ENCODE measurements at regions of chr1 and their contacts with region 1.

Region 1: GRCh38 chr1:178282949-178283367 is 189.1 kb downstream of the RASAL2 start:
- DNase-seq: no peak
- ATAC-seq: no peak
- H3K4me3 Mint-ChIP-seq: no peak overlapping the region
- H3K27ac Mint-ChIP-seq: no peak overlapping the region
- H3K4me1 Mint-ChIP-seq: no peaks in the 10 kb centered on the region
- H3K27me3 Mint-ChIP-seq: no peaks in the 10 kb centered on the region

Region 2: GRCh38 chr1:177368255-177368654 is 914.7 kb before region 1 on chr1:
- CTCF ChIA-PET with region 1: no interaction called
- POLR2A ChIA-PET with region 1: no interaction called
- intact Hi-C with region 1: no loop called
- DNase-seq: no peak
- ATAC-seq: peak; percentile 26
- H3K4me3 Mint-ChIP-seq: no peak overlapping the region
- H3K27ac Mint-ChIP-seq: no peak overlapping the region
- H3K4me1 Mint-ChIP-seq: no peaks in the 10 kb centered on the region
- H3K27me3 Mint-ChIP-seq: no peaks in the 10 kb centered on the region

Region 3: GRCh38 chr1:178031856-178032320 is 251.1 kb before region 1 on chr1:
- CTCF ChIA-PET with region 1: no interaction called
- POLR2A ChIA-PET with region 1: no interaction called
- intact Hi-C with region 1: loop called in 1 of 2 experiments (anchors 5 kb)
- DNase-seq: peak; percentile 63
- ATAC-seq: no peak
- H3K4me3 Mint-ChIP-seq: no peak overlapping the region
- H3K27ac Mint-ChIP-seq: no peak overlapping the region
- H3K4me1 Mint-ChIP-seq: no peaks in the 10 kb centered on the region
- H3K27me3 Mint-ChIP-seq: peaks cover 7% of the 10 kb centered on the region

Measured in activated CD4-positive, alpha-beta T cell treated with anti-CD3 and anti-CD28 coated beads for 36 hours (primary cell).